ENCODE measurements at regions of chr15 and their contacts with region 1.

Region 1: GRCh38 chr15:57527382-57528091 is 64.2 kb upstream of the MYZAP start:
- DNase-seq: peak; percentile 65
- H3K4me3 ChIP-seq: no peak overlapping the region
- CTCF ChIP-seq: peak; percentile 42

Region 2: DNA sequence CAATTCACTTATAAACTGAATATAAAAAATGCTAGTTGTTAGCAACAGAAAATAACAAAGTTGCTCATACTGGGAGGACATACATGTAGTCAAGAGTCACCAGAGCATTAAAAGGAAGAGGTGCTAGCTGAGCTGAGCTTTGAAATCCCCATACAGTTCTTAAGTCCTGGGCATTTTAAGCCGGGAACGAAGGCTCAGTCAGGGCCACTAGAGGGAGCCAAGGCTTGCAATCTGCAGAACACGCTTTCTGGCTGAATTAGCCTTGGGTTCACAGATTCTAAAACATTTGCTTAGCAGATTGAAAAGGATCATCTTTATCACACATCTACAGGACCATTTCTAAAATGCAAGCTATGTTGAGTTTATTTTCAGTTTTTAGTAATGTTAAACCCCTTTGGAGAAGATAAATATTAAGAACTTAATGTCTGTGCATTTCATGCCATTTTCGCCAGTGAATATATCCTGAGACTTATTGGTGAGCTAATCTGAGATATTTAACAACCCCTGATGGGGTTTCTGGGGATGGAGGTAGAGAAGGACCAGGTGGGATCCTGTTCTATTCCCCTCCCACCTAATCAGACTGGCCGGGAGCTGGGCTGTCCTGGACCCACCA is 1036.3 kb before region 1 on chr15:
- CTCF ChIA-PET with region 1: interaction called, 26 read pairs
- POLR2A ChIA-PET with region 1: no interaction called
- DNase-seq: peak; percentile 36
- H3K4me3 ChIP-seq: no peak overlapping the region
- CTCF ChIP-seq: peak; percentile 91

Region 3: GRCh38 chr15:57323806-57324589 is 203.5 kb before region 1 on chr15:
- CTCF ChIA-PET with region 1: interaction called, 21 read pairs
- POLR2A ChIA-PET with region 1: no interaction called
- DNase-seq: no peak
- H3K4me3 ChIP-seq: no peak overlapping the region
- CTCF ChIP-seq: no peak

Region 4: GRCh38 chr15:57356636-57357035 is 170.9 kb before region 1 on chr15:
- CTCF ChIA-PET with region 1: interaction called, 76 read pairs
- POLR2A ChIA-PET with region 1: no interaction called
- DNase-seq: no peak
- H3K4me3 ChIP-seq: no peak overlapping the region
- CTCF ChIP-seq: no peak

Region 5: DNA sequence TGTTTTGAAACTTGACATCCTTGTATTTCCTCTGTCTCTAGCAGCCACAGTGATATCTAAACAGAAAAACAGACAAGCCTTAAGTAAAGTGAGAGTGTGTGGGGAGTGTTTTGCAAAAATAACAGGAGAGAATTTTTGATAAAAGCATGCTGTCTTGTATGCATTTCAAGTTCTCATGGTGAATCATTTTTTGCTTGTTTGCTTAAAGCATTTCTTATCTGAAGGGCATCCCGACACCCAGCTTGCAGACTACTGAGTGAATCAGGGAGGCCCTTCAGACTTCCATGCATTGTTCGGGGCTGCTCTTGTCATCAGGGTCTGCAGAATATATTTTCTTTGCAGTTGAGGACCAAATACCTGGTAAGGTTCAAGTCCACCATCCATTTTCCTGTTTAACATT is 142.7 kb before region 1 on chr15:
- CTCF ChIA-PET with region 1: interaction called, 10 read pairs
- POLR2A ChIA-PET with region 1: no interaction called
- DNase-seq: peak; percentile 33
- H3K4me3 ChIP-seq: no peak overlapping the region
- CTCF ChIP-seq: no peak

Region 6: GRCh38 chr15:57505949-57506391 is 21.6 kb before region 1 on chr15:
- CTCF ChIA-PET with region 1: interaction called, 22 read pairs
- POLR2A ChIA-PET with region 1: no interaction called
- DNase-seq: no peak
- H3K4me3 ChIP-seq: no peak overlapping the region
- CTCF ChIP-seq: no peak

Measured in AG04449 (cell line).